K562 (cell line): ENCODE measurements at regions of chr2 and their contacts with region 1.

Region 1: DNA sequence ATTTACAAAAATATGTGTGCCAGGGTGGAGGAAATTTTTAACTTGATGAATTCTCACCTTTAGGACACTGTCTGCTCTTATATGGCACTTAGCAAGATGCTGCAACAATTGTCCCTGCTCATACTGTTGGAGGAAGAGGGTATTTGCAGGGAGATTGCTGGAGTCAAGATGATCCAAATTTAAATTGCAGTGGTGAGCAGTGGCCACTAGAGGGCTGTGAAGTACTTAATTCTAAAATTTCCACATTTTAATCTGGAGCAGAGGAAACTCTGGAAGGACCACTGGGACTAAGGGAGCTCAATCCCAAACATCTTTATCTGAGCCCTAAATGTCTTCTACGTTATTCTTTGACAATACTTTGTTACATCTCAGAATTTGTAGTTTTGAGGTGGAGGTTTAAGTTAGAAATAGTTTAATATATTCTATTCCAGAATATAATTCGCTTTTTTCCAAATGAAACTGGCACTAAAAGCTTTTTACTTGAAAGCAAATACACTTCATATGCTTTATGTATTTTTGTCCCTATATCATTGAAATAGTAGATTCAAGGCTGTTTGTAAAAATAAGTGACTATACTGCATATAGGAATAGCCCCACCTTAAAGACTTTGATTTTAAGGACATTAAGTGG is 33.0 kb upstream of the PTH2R start:
- DNase-seq: peak; percentile 31 to 45 (median 34)
- ATAC-seq: peak; percentile 72
- H3K4me3 ChIP-seq: no peak overlapping the region
- H3K27ac ChIP-seq: no peak overlapping the region
- H3K4me1 ChIP-seq: peaks cover 0 to 12% of the 10 kb centered on the region in 2 experiments; a peak in 2 of 5 replicates
- H3K27me3 ChIP-seq: no peaks in the 10 kb centered on the region
- CTCF ChIP-seq: peak; percentile 46 to 66 (median 64); a peak in 5 of 6 replicates
- EP300 ChIP-seq: no peak
- POLR2A ChIP-seq: no peak
- RAD21 ChIP-seq: peak; percentile 29 to 41; a peak in 2 of 4 replicates

Region 2: DNA sequence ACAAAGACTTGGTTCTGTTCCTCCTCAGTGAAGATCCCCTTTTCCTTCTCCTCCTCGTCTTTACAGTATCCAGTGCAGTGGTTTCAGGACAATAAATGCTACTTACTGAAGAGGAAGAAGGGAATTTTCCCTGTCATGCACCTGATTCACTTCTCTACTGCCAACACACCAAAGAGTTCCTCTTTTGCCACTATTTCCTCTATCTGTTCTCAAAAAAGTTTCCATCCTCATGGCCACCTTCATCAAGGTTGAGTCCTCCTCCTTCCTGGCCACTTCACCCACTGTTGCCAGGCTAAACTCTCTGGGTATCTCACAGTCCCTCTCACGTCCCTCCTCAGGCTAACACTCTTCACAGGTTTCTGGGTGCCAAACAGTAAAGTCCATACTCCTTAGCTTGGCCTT is 389.9 kb before region 1 on chr2:
- CTCF ChIA-PET with region 1: no interaction called
- POLR2A ChIA-PET with region 1: no interaction called
- in situ Hi-C with region 1: no loop called
- intact Hi-C with region 1: no loop called
- DNase-seq: no peak
- ATAC-seq: no peak
- H3K4me3 ChIP-seq: no peak overlapping the region
- H3K27ac ChIP-seq: no peak overlapping the region
- H3K4me1 ChIP-seq: no peaks in the 10 kb centered on the region
- H3K27me3 ChIP-seq: no peaks in the 10 kb centered on the region
- CTCF ChIP-seq: no peak
- EP300 ChIP-seq: no peak
- POLR2A ChIP-seq: no peak
- RAD21 ChIP-seq: no peak

Region 3: DNA sequence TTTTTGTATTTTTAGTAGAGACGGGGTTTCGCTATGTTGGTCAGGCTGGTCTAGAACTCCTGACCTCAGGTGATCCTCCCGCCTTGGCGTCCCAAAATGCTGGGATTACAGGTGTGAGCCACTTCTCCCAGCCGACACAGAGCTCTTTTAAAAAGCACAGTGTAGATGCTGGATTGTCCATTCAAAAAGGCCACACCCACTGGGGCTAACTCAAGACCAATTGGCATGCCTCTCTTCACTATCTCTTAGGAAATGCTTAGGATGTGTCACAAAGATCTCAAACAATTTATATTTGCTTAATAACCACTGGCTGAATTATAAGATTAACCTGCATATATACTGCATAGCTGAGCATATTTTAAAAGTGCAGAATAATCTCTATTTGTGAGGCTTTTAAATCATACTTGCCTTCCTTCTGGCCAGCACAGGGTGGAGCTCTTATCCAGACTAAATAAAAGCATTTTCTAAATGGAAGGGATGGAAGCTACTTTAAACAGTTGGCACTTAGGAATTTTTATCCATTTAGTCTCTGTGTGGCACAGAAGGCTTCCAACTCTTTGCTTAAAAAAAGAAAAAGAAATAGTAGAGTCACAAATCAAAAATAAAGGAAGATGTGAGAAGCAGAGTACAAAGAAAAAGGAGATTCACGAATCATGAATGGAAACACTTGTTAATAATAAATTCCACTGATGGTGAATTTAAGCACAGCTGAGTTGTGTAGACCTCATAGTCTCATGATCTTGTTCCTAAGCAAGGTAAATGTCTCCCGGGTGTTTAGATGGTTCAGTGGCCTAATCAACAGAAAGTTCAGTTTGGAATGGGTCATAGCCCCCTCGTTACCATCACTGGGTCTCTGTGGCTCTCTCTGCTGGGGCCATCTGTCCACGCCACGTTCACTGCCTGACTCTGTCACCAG is 271.6 kb before region 1 on chr2:
- CTCF ChIA-PET with region 1: no interaction called
- POLR2A ChIA-PET with region 1: no interaction called
- in situ Hi-C with region 1: no loop called
- intact Hi-C with region 1: loop called (anchors 1 kb)
- DNase-seq: peak in 2 of 4 experiments; percentile 9 to 13
- ATAC-seq: peak; percentile 79
- H3K4me3 ChIP-seq: no peak overlapping the region
- H3K27ac ChIP-seq: no peak overlapping the region
- H3K4me1 ChIP-seq: no peaks in the 10 kb centered on the region
- H3K27me3 ChIP-seq: 0 out of 5 replicates have a peak, but pooled peaks cover 0 to 4% of the 10 kb centered on the region in 2 experiments
- CTCF ChIP-seq: peak; percentile 14 to 62 (median 41); a peak in 5 of 6 replicates
- EP300 ChIP-seq: no peak
- POLR2A ChIP-seq: no peak
- RAD21 ChIP-seq: peak; percentile 56 to 64

Region 4: GRCh38 chr2:208350610-208351009 is 23.0 kb before region 1 on chr2:
- CTCF ChIA-PET with region 1: no interaction called
- POLR2A ChIA-PET with region 1: no interaction called
- in situ Hi-C with region 1: no loop called
- intact Hi-C with region 1: no loop called
- DNase-seq: no peak
- ATAC-seq: no peak
- H3K4me3 ChIP-seq: no peak overlapping the region
- H3K27ac ChIP-seq: no peak overlapping the region
- H3K4me1 ChIP-seq: no peaks in the 10 kb centered on the region
- H3K27me3 ChIP-seq: no peaks in the 10 kb centered on the region
- CTCF ChIP-seq: no peak
- EP300 ChIP-seq: no peak
- POLR2A ChIP-seq: no peak
- RAD21 ChIP-seq: no peak